Heart left ventricle (tissue), 16 donors: ENCODE measurements at regions of chr15 and their contacts with region 1.

Region 1: GRCh38 chr15:64046347-64047153 is at the start of gene DAPK2:
- DNase-seq: peak; percentile 75 to 90 (median 84)
- ATAC-seq: peak; percentile 60 to 91 (median 86)
- H3K4me3 ChIP-seq: peak within 1 kb of the TSS; percentile 56 to 85 (median 72)
- H3K27ac ChIP-seq: peak within 1 kb of the TSS in 11 of 12 donors; percentile 60 to 88 (median 80)
- H3K4me1 ChIP-seq: peaks cover 0 to 63% (median 29%) of the 10 kb centered on the region in 12 donors
- H3K27me3 ChIP-seq: no peaks in the 10 kb centered on the region
- CTCF ChIP-seq: peak; percentile 61 to 94 (median 87)
- POLR2A ChIP-seq: no peak
- total RNA-seq, gene DAPK2: 20.4 to 56.2 (median 26.4) TPM

Region 2: GRCh38 chr15:63763476-63764123 is 282.9 kb before region 1 on chr15:
- intact Hi-C with region 1: loop called in 2 of 10 experiments (anchors 5 kb)
- DNase-seq: no peak
- ATAC-seq: no peak
- H3K4me3 ChIP-seq: no peak overlapping the region
- H3K27ac ChIP-seq: no peak overlapping the region
- H3K4me1 ChIP-seq: peaks cover 0 to 64% (median 42%) of the 10 kb centered on the region in 12 donors
- H3K27me3 ChIP-seq: no peaks in the 10 kb centered on the region
- CTCF ChIP-seq: no peak
- POLR2A ChIP-seq: no peak

Region 3: DNA sequence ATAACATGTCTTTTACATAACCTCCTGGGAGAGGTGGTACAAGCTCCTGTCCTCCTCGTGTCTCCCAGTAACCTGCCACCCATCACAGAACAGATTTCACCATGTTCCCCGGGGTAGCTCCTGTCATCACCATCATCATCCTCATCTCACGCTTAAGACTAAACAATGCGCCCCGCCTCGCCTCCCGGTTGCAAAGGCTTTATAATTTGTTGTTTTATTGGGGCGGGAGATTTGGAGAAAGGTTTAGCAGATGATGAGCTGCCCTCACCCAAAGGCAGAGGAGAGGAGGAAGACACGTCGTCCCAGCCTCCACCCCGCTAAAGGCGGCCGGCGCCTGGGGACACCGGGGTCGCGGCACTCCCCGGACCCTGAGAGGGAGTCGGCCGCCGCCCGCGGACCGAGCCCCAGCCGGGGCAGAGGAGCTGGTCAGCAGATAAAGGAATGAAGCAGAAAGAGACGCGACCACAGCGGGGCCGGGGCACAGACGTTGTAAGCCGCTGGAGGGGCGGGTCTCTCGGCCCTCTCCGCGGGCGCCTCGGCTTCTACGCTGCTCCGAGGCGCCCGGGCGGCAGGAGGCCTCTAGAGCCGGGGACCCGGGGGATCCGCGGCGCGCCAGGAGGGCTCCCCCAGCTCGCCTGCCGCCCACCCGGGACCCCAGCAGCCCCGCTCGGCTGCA is 213.4 kb before region 1 on chr15:
- intact Hi-C with region 1: loop called in 4 of 10 experiments (anchors 5 kb)
- DNase-seq: peak in 4 of 5 donors; percentile 32 to 76 (median 42)
- ATAC-seq: peak in 3 of 4 donors; percentile 28 to 75 (median 71)
- H3K4me3 ChIP-seq: peak overlapping the region; percentile 48 to 95 (median 84)
- H3K27ac ChIP-seq: peak overlapping the region; percentile 88 to 98 (median 93)
- H3K4me1 ChIP-seq: peaks cover 0 to 50% (median 34%) of the 10 kb centered on the region in 12 donors
- H3K27me3 ChIP-seq: no peaks in the 10 kb centered on the region
- CTCF ChIP-seq: no peak
- POLR2A ChIP-seq: no peak

Region 4: GRCh38 chr15:63848499-63849214 is 197.9 kb before region 1 on chr15:
- intact Hi-C with region 1: no loop called
- DNase-seq: no peak
- ATAC-seq: no peak
- H3K4me3 ChIP-seq: no peak overlapping the region
- H3K27ac ChIP-seq: no peak overlapping the region
- H3K4me1 ChIP-seq: no peaks in the 10 kb centered on the region
- H3K27me3 ChIP-seq: no peaks in the 10 kb centered on the region
- CTCF ChIP-seq: no peak
- POLR2A ChIP-seq: no peak

Region 5: GRCh38 chr15:63915873-63916771 is 130.4 kb before region 1 on chr15:
- intact Hi-C with region 1: loop called in 6 of 10 experiments (anchors 5 to 10 kb)
- DNase-seq: no peak
- ATAC-seq: peak; percentile 15 to 61 (median 20)
- H3K4me3 ChIP-seq: no peak overlapping the region
- H3K27ac ChIP-seq: peak overlapping the region in 8 of 12 donors; percentile 35 to 84 (median 71)
- H3K4me1 ChIP-seq: peaks cover 0 to 46% (median 19%) of the 10 kb centered on the region in 12 donors
- H3K27me3 ChIP-seq: no peaks in the 10 kb centered on the region
- CTCF ChIP-seq: peak in 11 of 12 donors; percentile 9 to 47 (median 33)
- POLR2A ChIP-seq: no peak

Region 6: GRCh38 chr15:63986751-63987341 is 59.7 kb before region 1 on chr15:
- intact Hi-C with region 1: loop called in 3 of 10 experiments (anchors 5 to 10 kb)
- DNase-seq: no peak
- ATAC-seq: no peak
- H3K4me3 ChIP-seq: no peak overlapping the region
- H3K27ac ChIP-seq: peak overlapping the region; percentile 73 to 97 (median 87)
- H3K4me1 ChIP-seq: peaks cover 11 to 81% (median 67%) of the 10 kb centered on the region in 12 donors
- H3K27me3 ChIP-seq: no peaks in the 10 kb centered on the region
- CTCF ChIP-seq: no peak
- POLR2A ChIP-seq: no peak